ENCODE measurements at regions of chr13 and their contacts with region 1.

Region 1: GRCh38 chr13:93227878-93228642 is 1.5 kb downstream of the GPC6 start:
- DNase-seq: peak in 1 of 2 donors; percentile 81
- H3K4me3 ChIP-seq: peak overlapping the region; percentile 69 to 74
- H3K27ac ChIP-seq: peak overlapping the region; percentile 58 to 95
- H3K4me1 ChIP-seq: peaks cover 0 to 11% of the 10 kb centered on the region in 2 donors
- H3K27me3 ChIP-seq: no peaks in the 10 kb centered on the region
- CTCF ChIP-seq: peak in 2 of 3 experiments; percentile 32 to 69

Region 2: GRCh38 chr13:92716749-92717148 is 511.3 kb before region 1 on chr13:
- intact Hi-C with region 1: loop called (anchors 10 kb)
- DNase-seq: no peak
- H3K4me3 ChIP-seq: no peak overlapping the region
- H3K27ac ChIP-seq: no peak overlapping the region
- H3K4me1 ChIP-seq: no peaks in the 10 kb centered on the region
- H3K27me3 ChIP-seq: no peaks in the 10 kb centered on the region
- CTCF ChIP-seq: peak in 2 of 3 experiments; percentile 28 to 32

Region 3: DNA sequence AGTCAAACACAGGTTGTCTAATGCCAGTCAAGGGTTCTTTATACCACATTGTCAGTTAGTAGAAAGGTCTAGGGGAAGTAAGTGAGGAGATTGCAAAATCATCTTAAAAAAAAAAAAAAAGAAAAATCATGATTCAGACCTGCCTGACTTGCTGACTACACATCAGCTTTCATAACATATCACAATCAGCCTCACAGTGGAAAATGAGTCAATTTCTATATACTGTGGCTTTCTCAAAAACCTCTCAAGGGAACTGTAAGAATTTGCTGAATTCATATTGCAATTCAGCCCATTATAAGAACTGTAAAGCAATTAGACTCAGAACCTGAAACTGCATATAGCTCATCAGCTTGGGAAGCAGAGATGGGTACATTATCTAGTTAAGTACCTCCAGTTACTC is 76.8 kb before region 1 on chr13:
- intact Hi-C with region 1: loop called (anchors 2 kb)
- DNase-seq: no peak
- H3K4me3 ChIP-seq: no peak overlapping the region
- H3K27ac ChIP-seq: no peak overlapping the region
- H3K4me1 ChIP-seq: no peaks in the 10 kb centered on the region
- H3K27me3 ChIP-seq: no peaks in the 10 kb centered on the region
- CTCF ChIP-seq: no peak

Region 4: GRCh38 chr13:94345374-94346195 is 1117.5 kb after region 1 on chr13:
- intact Hi-C with region 1: loop called (anchors 5 kb)
- DNase-seq: no peak
- H3K4me3 ChIP-seq: no peak overlapping the region
- H3K27ac ChIP-seq: no peak overlapping the region
- H3K4me1 ChIP-seq: peaks cover 0 to 7% of the 10 kb centered on the region in 2 donors
- H3K27me3 ChIP-seq: no peaks in the 10 kb centered on the region
- CTCF ChIP-seq: peak in 1 of 3 experiments; percentile 3

Region 5: DNA sequence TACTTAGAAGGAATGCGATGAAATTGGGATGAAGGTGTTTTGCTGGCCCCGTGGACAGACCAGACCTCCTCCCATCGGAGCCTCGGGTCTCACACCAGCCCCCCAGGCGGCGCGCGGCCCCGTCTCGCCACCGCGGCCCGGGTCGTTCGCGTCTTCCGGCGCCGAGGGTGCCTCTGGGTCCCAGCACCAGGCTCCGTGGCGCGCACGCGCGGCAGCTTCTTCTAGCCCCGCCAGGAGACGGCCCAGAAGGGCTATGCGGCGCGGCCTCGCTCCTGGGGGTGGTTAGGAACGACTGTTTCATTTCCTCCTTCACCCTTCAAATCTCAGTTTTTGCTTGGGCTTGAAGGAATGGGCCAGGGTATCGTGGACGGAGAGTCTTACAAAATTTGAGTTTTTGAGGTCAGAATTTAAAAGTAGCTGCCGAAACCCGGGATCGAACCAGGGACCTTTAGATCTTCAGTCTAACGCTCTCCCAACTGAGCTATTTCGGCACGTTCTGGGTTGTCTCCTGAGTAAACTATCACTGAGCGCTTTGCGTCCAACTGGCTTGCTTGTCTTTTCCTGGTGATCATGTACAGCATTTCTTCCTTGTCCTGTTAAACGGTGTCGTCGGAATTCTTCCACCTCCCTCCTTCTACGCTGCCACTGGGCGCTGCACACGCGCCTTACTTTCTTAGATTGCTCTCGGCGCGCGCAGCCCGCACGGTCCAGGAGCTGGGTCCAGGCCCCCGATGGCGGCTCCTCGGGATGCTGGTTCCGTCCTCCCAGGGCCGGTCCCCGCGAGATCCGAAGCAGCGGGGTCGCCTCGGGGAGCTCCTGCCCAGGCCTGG is 1321.4 kb after region 1 on chr13:
- intact Hi-C with region 1: loop called (anchors 10 kb)
- DNase-seq: peak; percentile 68 to 96
- H3K4me3 ChIP-seq: peak overlapping the region; percentile 72 to 84
- H3K27ac ChIP-seq: peak overlapping the region; percentile 96 to 99
- H3K4me1 ChIP-seq: peaks cover 2 to 5% of the 10 kb centered on the region in 2 donors
- H3K27me3 ChIP-seq: no peaks in the 10 kb centered on the region
- CTCF ChIP-seq: peak in 1 of 3 experiments; percentile 12

Measured in ascending aorta (tissue), 2 donors.